ENCODE measurements at regions of chr4 and their contacts with region 1.

Region 1: GRCh38 chr4:31045724-31046318 is 325.7 kb downstream of the PCDH7 start:
- DNase-seq: peak; percentile 57
- H3K4me3 Mint-ChIP-seq: no peak overlapping the region
- H3K27ac Mint-ChIP-seq: no peak overlapping the region
- H3K4me1 Mint-ChIP-seq: peaks cover 9% of the 10 kb centered on the region
- H3K27me3 Mint-ChIP-seq: no peaks in the 10 kb centered on the region
- CTCF ChIP-seq: peak; percentile 55

Region 2: DNA sequence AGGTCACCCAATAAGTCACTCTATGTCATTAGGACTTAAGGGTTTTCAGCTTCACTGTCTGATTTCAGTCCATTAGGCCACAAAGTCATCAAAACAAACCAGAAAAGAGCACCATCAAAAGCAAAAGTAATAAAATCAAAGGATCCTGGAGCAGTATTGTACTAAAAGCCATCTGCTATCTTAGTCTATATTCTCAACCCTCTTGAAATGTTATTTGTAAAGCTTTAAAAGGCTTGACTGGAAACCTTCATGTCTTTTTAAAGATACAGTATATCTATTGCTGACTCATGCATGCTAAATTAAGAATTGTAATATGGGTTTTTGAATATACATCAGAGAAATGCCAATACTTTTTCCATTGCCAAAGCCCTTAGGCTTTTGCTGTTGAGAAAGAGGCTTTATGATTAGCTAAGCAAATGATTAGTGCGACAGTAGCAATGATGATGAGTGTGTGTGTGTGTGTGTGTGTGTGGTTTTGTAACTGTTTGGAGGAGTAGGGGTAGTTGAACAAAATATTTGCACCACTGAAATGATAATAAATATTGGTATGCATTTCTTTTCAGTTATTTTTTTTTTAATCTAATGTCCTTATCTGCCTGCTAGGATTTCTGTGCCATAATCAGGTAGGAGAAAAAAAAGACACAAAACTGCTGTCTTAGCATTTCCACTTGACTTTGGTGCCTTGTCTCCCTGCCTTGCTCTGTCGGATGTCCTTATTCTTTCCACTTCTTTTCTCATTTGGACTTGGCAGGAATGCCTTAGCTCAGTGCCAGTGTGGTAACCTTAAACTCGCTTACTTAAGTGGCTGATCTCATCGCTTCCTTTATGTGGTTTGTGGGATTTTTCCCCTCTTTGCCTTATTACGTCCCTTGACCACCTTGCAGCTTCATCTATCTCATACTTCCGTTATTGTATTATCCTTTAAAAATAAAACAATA is 206.0 kb before region 1 on chr4:
- CTCF ChIA-PET with region 1: no interaction called
- POLR2A ChIA-PET with region 1: no interaction called
- intact Hi-C with region 1: no loop called
- DNase-seq: peak; percentile 77
- H3K4me3 Mint-ChIP-seq: no peak overlapping the region
- H3K27ac Mint-ChIP-seq: no peak overlapping the region
- H3K4me1 Mint-ChIP-seq: peaks cover 24% of the 10 kb centered on the region
- H3K27me3 Mint-ChIP-seq: no peaks in the 10 kb centered on the region
- CTCF ChIP-seq: no peak

Region 3: DNA sequence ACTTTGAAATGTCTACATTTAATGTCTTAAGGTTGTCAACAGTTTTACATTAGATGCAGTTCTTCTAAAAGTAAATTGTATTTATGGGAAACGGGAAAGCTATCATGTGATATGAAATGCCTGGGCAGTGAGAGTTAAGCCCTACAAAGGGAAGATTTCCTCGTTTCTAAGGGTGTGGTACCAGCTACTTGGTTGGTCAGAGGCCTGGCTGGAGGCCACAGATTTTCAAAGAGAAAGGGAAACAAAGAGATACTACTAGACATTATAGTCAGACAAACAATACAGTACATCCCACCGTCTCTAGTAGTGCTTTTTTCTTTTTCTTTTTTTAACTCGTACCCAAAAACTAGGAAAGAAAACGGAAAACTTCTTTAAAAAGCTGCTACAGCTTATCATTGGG is 142.2 kb after region 1 on chr4:
- CTCF ChIA-PET with region 1: no interaction called
- POLR2A ChIA-PET with region 1: no interaction called
- intact Hi-C with region 1: no loop called
- DNase-seq: no peak
- H3K4me3 Mint-ChIP-seq: no peak overlapping the region
- H3K27ac Mint-ChIP-seq: no peak overlapping the region
- H3K4me1 Mint-ChIP-seq: no peaks in the 10 kb centered on the region
- H3K27me3 Mint-ChIP-seq: no peaks in the 10 kb centered on the region
- CTCF ChIP-seq: no peak

Region 4: DNA sequence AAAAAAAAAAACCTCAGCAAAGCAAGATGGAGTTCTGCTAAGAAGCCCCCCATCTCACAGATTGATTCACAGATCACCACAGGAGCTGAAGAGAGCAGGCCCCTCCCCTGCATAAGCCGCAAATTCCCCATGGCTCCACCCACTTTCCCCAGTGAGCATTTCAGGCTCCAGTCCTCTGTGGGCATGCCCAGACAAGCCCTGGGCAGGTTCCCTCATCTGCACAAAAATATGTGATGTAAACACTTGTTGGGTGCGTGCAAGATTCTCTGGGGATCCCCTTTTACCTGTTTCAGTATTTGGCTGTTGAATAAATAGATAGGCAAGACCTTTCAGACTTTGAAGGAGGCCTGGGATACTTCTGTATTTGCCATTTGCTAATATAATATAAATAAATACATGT is 188.7 kb after region 1 on chr4:
- CTCF ChIA-PET with region 1: no interaction called
- POLR2A ChIA-PET with region 1: no interaction called
- intact Hi-C with region 1: loop called (anchors 10 kb)
- DNase-seq: peak; percentile 72
- H3K4me3 Mint-ChIP-seq: no peak overlapping the region
- H3K27ac Mint-ChIP-seq: peak overlapping the region; percentile 62
- H3K4me1 Mint-ChIP-seq: peaks cover 6% of the 10 kb centered on the region
- H3K27me3 Mint-ChIP-seq: no peaks in the 10 kb centered on the region
- CTCF ChIP-seq: no peak

Region 5: DNA sequence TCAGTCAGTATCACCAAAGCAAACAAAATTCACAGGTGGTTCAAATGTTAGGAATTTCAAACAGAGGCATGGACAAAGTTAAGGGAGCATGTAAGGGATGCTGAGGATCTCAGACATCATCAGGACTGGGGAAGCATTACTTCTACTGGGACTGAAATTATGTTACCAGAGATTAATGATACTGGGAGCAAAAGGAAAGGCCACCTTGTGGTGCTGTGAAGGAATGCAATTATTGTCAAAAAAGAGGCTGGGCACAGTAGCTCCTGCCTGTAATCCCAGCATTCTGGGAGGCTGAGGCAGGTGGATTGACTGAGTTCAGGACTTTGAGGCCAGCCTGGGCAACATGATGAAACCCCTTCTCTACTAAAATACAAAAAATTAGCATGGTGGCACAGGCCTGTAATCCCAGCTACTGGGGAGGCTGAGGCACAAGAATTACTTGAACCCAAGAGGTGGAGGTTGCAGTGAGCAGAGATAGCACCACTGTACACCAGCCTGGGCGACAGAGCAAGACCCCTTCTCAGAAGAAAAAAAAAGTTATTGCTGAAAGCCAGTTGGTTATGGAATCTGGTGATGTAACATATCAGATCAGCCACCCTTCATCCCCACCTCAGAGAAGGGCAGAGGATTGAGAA is 628.6 kb after region 1 on chr4:
- CTCF ChIA-PET with region 1: interaction called, 10 read pairs
- POLR2A ChIA-PET with region 1: no interaction called
- intact Hi-C with region 1: loop called (anchors 5 kb)
- DNase-seq: peak; percentile 43
- H3K4me3 Mint-ChIP-seq: no peak overlapping the region
- H3K27ac Mint-ChIP-seq: no peak overlapping the region
- H3K4me1 Mint-ChIP-seq: no peaks in the 10 kb centered on the region
- H3K27me3 Mint-ChIP-seq: no peaks in the 10 kb centered on the region
- CTCF ChIP-seq: peak; percentile 56

Region 6: GRCh38 chr4:31692402-31692940 is 646.6 kb after region 1 on chr4:
- CTCF ChIA-PET with region 1: no interaction called
- POLR2A ChIA-PET with region 1: no interaction called
- intact Hi-C with region 1: loop called (anchors 2 kb)
- DNase-seq: peak; percentile 34
- H3K4me3 Mint-ChIP-seq: no peak overlapping the region
- H3K27ac Mint-ChIP-seq: peak overlapping the region; percentile 3
- H3K4me1 Mint-ChIP-seq: no peaks in the 10 kb centered on the region
- H3K27me3 Mint-ChIP-seq: no peaks in the 10 kb centered on the region
- CTCF ChIP-seq: peak; percentile 59

Measured in MCF 10A (cell line).